H1 (cell line): ENCODE measurements at regions of chr3 and their contacts with region 1.

Region 1: DNA sequence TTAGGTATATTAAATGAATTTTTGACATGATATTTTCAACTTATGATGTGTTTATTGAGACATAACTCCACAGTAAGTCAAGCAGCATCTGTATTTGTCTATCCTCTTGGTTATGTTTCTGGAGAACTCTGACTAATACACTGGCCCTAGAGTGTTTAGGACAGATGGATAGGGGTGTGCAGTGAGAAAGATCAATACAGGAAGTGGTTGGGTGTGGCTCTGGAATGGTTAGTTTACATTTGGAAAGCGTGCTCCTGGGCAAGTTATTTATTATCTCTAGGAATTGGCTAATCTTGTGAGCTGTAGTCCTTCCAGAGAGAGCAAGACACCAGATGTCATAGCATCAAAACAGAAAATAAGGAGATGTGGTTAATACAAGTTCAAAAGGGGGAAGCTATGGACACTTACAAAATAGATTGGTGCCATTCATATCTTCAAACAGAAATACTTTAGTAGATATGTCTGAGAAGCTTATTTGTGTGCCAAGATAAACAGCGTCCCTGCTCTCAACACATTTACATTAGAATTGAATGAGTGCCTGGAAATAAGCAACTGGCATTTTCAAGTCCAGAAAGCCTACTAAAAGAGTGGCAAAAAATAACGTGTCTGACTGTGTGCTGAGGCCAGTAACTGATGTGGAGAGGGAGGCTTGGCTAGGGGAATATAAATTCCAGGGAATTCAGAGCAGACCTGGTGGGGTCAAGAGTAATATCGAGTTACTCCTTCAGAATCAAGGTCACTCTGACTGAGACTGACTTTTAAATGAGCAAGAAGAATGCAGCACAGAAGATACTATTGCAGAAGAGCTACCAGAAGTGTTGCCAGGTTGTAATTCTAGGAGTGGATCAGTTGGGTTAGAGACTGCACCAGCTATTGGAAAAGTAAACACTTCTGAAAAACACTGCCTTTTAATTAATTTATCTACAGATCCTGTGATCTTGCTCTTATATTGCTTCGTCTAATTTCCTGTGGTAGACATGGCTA is 33.4 kb upstream of the PLAAT1 start:
- DNase-seq: no peak
- H3K4me3 ChIP-seq: no peak overlapping the region
- H3K27ac ChIP-seq: no peak overlapping the region
- H3K4me1 ChIP-seq: peaks cover 0 to 3% (median 0%) of the 10 kb centered on the region in 4 experiments; a peak in 2 of 7 replicates
- H3K27me3 ChIP-seq: no peaks in the 10 kb centered on the region
- CTCF ChIP-seq: no peak
- EP300 ChIP-seq: no peak
- POLR2A ChIP-seq: no peak
- RAD21 ChIP-seq: no peak

Region 2: GRCh38 chr3:193190146-193190786 is 17.3 kb before region 1 on chr3:
- CTCF ChIA-PET with region 1: interaction called, 15 read pairs
- POLR2A ChIA-PET with region 1: no interaction called
- DNase-seq: peak; percentile 54 to 60
- H3K4me3 ChIP-seq: no peak overlapping the region
- H3K27ac ChIP-seq: no peak overlapping the region
- H3K4me1 ChIP-seq: peaks cover 0 to 3% (median 0%) of the 10 kb centered on the region in 4 experiments; a peak in 1 of 7 replicates
- H3K27me3 ChIP-seq: no peaks in the 10 kb centered on the region
- CTCF ChIP-seq: peak; percentile 8 to 89 (median 85)
- EP300 ChIP-seq: no peak
- POLR2A ChIP-seq: no peak
- RAD21 ChIP-seq: peak; percentile 87 to 95

Region 3: GRCh38 chr3:193314161-193314560 is 106.6 kb after region 1 on chr3:
- CTCF ChIA-PET with region 1: no interaction called
- POLR2A ChIA-PET with region 1: no interaction called
- DNase-seq: no peak
- H3K4me3 ChIP-seq: no peak overlapping the region
- H3K27ac ChIP-seq: no peak overlapping the region
- H3K4me1 ChIP-seq: peaks cover 0 to 8% (median 3%) of the 10 kb centered on the region in 4 experiments; a peak in 4 of 7 replicates
- H3K27me3 ChIP-seq: no peaks in the 10 kb centered on the region
- CTCF ChIP-seq: peak in 2 of 3 experiments; percentile 7 to 52; a peak in 2 of 4 replicates
- EP300 ChIP-seq: no peak
- POLR2A ChIP-seq: no peak
- RAD21 ChIP-seq: peak; percentile 15 to 29; a peak in 2 of 4 replicates